K562 (cell line): ENCODE measurements at regions of chr22 and their contacts with region 1.

Region 1: GRCh38 chr22:42553475-42554361 is at the start of gene SERHL2:
- DNase-seq: peak; percentile 94 to 95 (median 94)
- ATAC-seq: peak; percentile 94
- H3K4me3 ChIP-seq: peak within 1 kb of the TSS; percentile 51
- H3K27ac ChIP-seq: peak within 1 kb of the TSS; percentile 82
- H3K4me1 ChIP-seq: peaks cover 7 to 32% of the 10 kb centered on the region in 2 experiments; a peak in 4 of 5 replicates
- H3K27me3 ChIP-seq: no peaks in the 10 kb centered on the region
- CTCF ChIP-seq: no peak
- EP300 ChIP-seq: no peak
- POLR2A ChIP-seq: peak; percentile 82
- RAD21 ChIP-seq: no peak
- polyA plus RNA-seq, gene SERHL2: 24.6 to 28.3 TPM

Region 2: DNA sequence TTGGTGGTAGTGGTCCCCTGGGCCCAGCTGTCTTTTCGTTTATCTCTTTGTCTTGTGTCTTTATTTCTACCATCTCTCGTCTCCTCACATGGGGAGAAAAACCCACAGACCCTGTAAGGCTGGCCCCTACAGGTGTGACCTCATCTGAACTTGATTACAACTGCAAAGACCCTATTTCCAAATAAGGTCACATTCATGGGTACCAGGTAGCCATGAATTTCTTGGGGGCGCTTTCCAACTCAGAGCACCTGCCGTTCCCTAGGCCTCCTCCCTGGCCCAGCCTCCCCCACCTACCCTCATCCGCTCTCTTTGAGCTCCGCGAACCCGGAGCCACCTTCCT is 20.1 kb before region 1 on chr22:
- CTCF ChIA-PET with region 1: no interaction called
- POLR2A ChIA-PET with region 1: no interaction called
- in situ Hi-C with region 1: no loop called
- intact Hi-C with region 1: loop called (anchors 2 kb)
- DNase-seq: no peak
- ATAC-seq: no peak
- H3K4me3 ChIP-seq: no peak overlapping the region
- H3K27ac ChIP-seq: peak overlapping the region; percentile 59; the same call in 2 of the 3 replicates
- H3K4me1 ChIP-seq: peaks cover 10 to 29% of the 10 kb centered on the region in 2 experiments; a peak in 4 of 5 replicates
- H3K27me3 ChIP-seq: no peaks in the 10 kb centered on the region
- CTCF ChIP-seq: no peak
- EP300 ChIP-seq: no peak
- POLR2A ChIP-seq: no peak
- RAD21 ChIP-seq: no peak

Region 3: GRCh38 chr22:42581762-42582716 is 28.3 kb after region 1 on chr22:
- CTCF ChIA-PET with region 1: no interaction called
- POLR2A ChIA-PET with region 1: no interaction called
- in situ Hi-C with region 1: no loop called
- intact Hi-C with region 1: no loop called
- DNase-seq: peak; percentile 70 to 87 (median 76)
- ATAC-seq: peak; percentile 97
- H3K4me3 ChIP-seq: peak overlapping the region; percentile 57
- H3K27ac ChIP-seq: peak overlapping the region; percentile 74
- H3K4me1 ChIP-seq: peaks cover 0 to 7% of the 10 kb centered on the region in 2 experiments; a peak in 2 of 5 replicates
- H3K27me3 ChIP-seq: no peaks in the 10 kb centered on the region
- CTCF ChIP-seq: no peak
- EP300 ChIP-seq: no peak
- POLR2A ChIP-seq: peak; percentile 71
- RAD21 ChIP-seq: no peak